ENCODE measurements at regions of chr12 and their contacts with region 1.

Region 1: GRCh38 chr12:1939801-1940607 is 21.6 kb upstream of the CACNA2D4 start:
- DNase-seq: peak; percentile 81
- ATAC-seq: peak; percentile 64
- H3K4me3 ChIP-seq: no peak overlapping the region
- H3K27ac ChIP-seq: no peak overlapping the region
- H3K4me1 ChIP-seq: peaks cover 21% of the 10 kb centered on the region
- H3K27me3 ChIP-seq: no peaks in the 10 kb centered on the region
- CTCF ChIP-seq: peak; percentile 91

Region 2: GRCh38 chr12:1795785-1796514 is 144.1 kb before region 1 on chr12:
- CTCF ChIA-PET with region 1: interaction called, 9 read pairs
- POLR2A ChIA-PET with region 1: no interaction called
- intact Hi-C with region 1: loop called (anchors 1 kb)
- DNase-seq: peak; percentile 88
- ATAC-seq: peak; percentile 100
- H3K4me3 ChIP-seq: peak overlapping the region; percentile 58
- H3K27ac ChIP-seq: no peak overlapping the region
- H3K4me1 ChIP-seq: peaks cover 5% of the 10 kb centered on the region; the same call in 1 of the 2 replicates
- H3K27me3 ChIP-seq: no peaks in the 10 kb centered on the region
- CTCF ChIP-seq: peak; percentile 84

Measured in PC-3 (cell line).